ENCODE measurements at regions of chr4 and their contacts with region 1.

Region 1: DNA sequence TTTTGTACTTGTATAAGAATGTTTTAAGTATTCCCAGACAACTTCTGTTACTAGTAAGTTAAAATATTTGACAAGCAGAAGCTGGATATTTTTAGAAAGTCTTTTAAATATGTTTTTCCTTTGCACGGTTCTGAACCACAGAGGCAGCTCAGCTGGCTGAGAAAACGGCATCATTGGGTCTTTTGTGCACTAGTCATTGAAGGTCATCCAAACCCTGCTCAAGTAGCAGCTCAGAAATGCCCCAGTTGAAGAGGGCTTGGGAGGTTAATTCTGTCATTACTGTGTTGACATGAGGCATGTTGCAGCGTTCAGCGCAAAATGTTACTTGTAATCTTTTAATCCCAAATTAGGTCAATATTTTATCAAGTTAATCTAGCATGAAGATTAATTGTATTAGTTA is 383.7 kb upstream of the FAM241A start:
- DNase-seq: no peak
- H3K4me3 ChIP-seq: no peak overlapping the region
- H3K27ac ChIP-seq: no peak overlapping the region
- H3K4me1 ChIP-seq: no peaks in the 10 kb centered on the region
- H3K27me3 ChIP-seq: peaks cover 0 to 7% (median 0%) of the 10 kb centered on the region in 4 donors
- CTCF ChIP-seq: no peak
- POLR2A ChIP-seq: no peak

Region 2: GRCh38 chr4:111631215-111631999 is 130.1 kb before region 1 on chr4:
- intact Hi-C with region 1: no loop called
- DNase-seq: no peak
- H3K4me3 ChIP-seq: no peak overlapping the region
- H3K27ac ChIP-seq: no peak overlapping the region
- H3K4me1 ChIP-seq: peaks cover 0 to 10% (median 0%) of the 10 kb centered on the region in 3 donors
- H3K27me3 ChIP-seq: peaks cover 0 to 10% (median 1%) of the 10 kb centered on the region in 4 donors
- CTCF ChIP-seq: peak in 2 of 6 experiments; percentile 17 to 50
- POLR2A ChIP-seq: no peak

Region 3: GRCh38 chr4:111775556-111776297 is 14.2 kb after region 1 on chr4:
- intact Hi-C with region 1: loop called (anchors 2 kb)
- DNase-seq: no peak
- H3K4me3 ChIP-seq: no peak overlapping the region
- H3K27ac ChIP-seq: no peak overlapping the region
- H3K4me1 ChIP-seq: no peaks in the 10 kb centered on the region
- H3K27me3 ChIP-seq: peaks cover 0 to 40% (median 0%) of the 10 kb centered on the region in 4 donors
- CTCF ChIP-seq: no peak
- POLR2A ChIP-seq: no peak